Activated CD4-positive, alpha-beta memory T cell treated with anti-CD3 and anti-CD28 coated beads for 36 hours (primary cell): ENCODE measurements at regions of chr3 and their contacts with region 1.

Region 1: GRCh38 chr3:10703875-10704274 is 112.2 kb upstream of the SLC6A11 start:
- DNase-seq: peak; percentile 18
- H3K4me3 Mint-ChIP-seq: no peak overlapping the region
- H3K27ac Mint-ChIP-seq: no peak overlapping the region
- H3K4me1 Mint-ChIP-seq: peaks cover 11% of the 10 kb centered on the region
- H3K27me3 Mint-ChIP-seq: peaks cover 64% of the 10 kb centered on the region

Region 2: DNA sequence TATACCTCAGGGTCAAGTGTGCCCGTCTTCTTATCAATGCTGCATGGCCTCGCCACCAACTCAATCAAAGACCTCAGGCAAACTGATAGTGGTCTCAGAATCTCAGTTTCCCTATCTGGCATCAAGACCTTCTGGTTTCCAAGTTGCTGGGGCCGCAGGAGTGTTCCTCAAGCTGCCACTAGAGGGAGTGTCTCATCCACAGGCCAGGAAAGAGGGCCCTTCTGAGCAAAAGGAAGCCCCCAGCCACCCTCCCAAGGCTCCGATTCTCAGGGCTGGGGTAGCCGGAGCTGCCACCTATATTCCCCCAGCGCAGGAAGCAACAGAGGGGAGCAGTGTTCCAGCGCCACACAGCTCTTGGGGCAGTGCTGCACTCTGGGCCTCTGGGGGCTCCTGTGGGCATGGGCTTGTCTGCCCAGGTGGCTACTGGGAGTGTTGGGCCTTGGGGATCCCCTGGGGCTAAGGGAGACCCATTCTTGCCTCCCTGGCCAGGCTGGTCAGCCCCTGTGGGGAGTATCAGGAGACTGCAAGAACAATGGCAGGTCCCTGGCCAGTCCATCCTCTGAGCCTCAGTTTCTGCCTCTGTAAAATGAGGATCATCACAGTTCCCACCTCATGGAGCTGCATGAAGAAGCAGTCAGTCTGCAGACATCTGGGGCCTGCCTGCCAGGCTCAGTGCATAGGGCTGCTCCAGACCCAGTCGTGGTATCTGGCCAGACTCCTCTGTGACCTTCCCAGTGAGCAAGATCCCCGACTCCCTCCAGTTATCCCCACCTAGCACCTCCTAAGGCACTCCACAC is 359.5 kb before region 1 on chr3:
- CTCF ChIA-PET with region 1: interaction called, 3 read pairs
- POLR2A ChIA-PET with region 1: no interaction called
- intact Hi-C with region 1: loop called (anchors 10 kb)
- DNase-seq: peak; percentile 68
- H3K4me3 Mint-ChIP-seq: no peak overlapping the region
- H3K27ac Mint-ChIP-seq: no peak overlapping the region
- H3K4me1 Mint-ChIP-seq: no peaks in the 10 kb centered on the region
- H3K27me3 Mint-ChIP-seq: peaks cover 1% of the 10 kb centered on the region

Region 3: DNA sequence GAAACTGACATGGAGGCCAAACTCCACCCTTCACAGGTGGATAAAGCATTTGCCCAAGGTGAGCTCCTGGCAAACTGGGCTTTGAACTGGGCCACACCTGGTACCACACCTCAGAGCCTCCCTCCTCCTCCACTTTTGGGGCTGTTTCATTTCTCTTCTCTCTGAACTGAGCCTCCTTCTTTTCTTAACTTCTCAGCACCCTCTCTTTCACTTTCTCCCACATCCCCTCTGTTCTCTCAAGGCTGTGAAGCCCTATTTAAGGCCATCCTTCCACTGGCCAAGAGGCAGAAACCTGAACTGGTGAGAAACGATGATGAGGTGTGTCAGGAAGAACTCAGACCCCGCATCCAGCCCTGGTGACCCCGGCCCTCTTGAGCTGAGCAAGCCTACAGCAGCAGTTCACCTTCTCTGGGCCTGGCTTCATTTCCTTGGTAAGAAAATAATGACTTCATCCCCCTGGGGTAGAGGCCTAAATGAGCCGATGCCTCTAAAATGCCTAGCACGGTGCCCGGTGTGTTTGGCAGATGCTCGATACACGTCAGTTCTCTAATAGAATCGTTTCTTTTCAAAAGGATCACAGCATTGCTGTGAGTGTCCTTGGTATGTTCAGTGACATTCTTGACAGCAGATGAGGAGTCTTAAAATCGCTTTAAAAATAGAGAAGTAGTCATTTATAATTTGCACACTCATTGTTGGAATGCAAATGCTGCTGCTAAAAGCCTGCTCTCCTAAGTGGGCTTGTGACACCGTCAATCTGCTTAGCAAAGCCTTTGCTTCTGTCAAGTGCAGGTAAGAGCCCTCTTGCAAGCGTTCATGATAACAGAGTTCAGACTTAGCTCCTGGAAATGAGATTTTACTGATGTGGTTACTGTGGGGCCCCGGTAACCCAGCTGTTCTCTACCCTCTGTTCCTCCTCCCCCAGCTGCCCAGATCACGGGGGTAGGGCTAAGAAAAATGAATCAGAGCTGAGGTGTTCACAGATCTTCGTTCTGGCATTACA is 100.8 kb before region 1 on chr3:
- CTCF ChIA-PET with region 1: no interaction called
- POLR2A ChIA-PET with region 1: no interaction called
- intact Hi-C with region 1: loop called (anchors 5 kb)
- DNase-seq: peak; percentile 83
- H3K4me3 Mint-ChIP-seq: peak overlapping the region; percentile 6
- H3K27ac Mint-ChIP-seq: peak overlapping the region; percentile 47
- H3K4me1 Mint-ChIP-seq: peaks cover 33% of the 10 kb centered on the region
- H3K27me3 Mint-ChIP-seq: peaks cover 13% of the 10 kb centered on the region